Breast epithelium (tissue), 4 donors: ENCODE measurements at regions of chr4 and their contacts with region 1.

Region 1: DNA sequence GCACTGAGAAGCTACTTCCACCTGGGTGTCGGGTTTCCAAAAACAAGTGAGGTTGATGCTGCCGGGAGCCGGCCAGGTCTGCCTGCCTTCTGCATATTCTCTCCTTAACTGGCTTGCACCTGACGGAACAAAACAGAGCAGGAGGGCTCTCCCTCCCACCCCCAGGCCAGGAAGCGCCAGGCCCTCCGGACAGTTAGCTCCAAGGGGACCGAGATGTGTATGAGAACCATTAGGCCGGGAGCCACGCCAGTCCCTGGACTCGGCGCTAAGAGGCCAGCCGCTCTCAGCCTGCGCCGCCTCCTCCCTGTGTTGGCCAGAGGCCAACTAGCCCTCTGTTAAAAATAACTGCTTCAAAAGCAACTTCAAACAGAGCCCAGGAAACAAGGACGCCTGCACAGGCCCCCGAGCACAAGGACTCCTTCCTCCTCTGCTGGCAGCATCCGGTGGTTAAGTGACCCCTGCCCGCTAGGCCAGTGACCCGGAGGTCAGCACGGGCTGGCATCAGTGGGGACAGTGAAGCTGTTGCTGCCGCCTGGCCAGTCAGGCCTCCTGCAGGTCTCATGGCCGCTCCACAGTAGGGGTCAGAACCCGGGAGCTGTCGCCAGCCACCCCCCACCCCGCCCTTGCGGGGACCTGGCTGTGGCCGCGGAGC is 107.9 kb downstream of the ABLIM2 start:
- DNase-seq: peak in 1 of 2 donors; percentile 26
- H3K4me3 ChIP-seq: peak overlapping the region in 2 of 3 donors; percentile 21 to 49
- H3K27ac ChIP-seq: peak overlapping the region; percentile 25 to 64
- H3K4me1 ChIP-seq: peaks cover 0 to 5% of the 10 kb centered on the region in 2 donors
- H3K27me3 ChIP-seq: no peaks in the 10 kb centered on the region
- CTCF ChIP-seq: no peak
- POLR2A ChIP-seq: no peak

Region 2: GRCh38 chr4:7987148-7987989 is 63.3 kb before region 1 on chr4:
- intact Hi-C with region 1: no loop called
- DNase-seq: peak; percentile 50 to 71
- H3K4me3 ChIP-seq: no peak overlapping the region
- H3K27ac ChIP-seq: no peak overlapping the region
- H3K4me1 ChIP-seq: no peaks in the 10 kb centered on the region
- H3K27me3 ChIP-seq: no peaks in the 10 kb centered on the region
- CTCF ChIP-seq: peak; percentile 72 to 90 (median 81)
- POLR2A ChIP-seq: no peak

Region 3: GRCh38 chr4:8664976-8665375 is 614.3 kb after region 1 on chr4:
- intact Hi-C with region 1: loop called (anchors 5 kb)
- DNase-seq: no peak
- H3K4me3 ChIP-seq: no peak overlapping the region
- H3K27ac ChIP-seq: no peak overlapping the region
- H3K4me1 ChIP-seq: no peaks in the 10 kb centered on the region
- H3K27me3 ChIP-seq: peaks cover 0 to 18% of the 10 kb centered on the region in 2 donors
- CTCF ChIP-seq: no peak
- POLR2A ChIP-seq: no peak